CD4-positive, alpha-beta memory T cell (primary cell): ENCODE measurements at regions of chr15 and their contacts with region 1.

Region 1: DNA sequence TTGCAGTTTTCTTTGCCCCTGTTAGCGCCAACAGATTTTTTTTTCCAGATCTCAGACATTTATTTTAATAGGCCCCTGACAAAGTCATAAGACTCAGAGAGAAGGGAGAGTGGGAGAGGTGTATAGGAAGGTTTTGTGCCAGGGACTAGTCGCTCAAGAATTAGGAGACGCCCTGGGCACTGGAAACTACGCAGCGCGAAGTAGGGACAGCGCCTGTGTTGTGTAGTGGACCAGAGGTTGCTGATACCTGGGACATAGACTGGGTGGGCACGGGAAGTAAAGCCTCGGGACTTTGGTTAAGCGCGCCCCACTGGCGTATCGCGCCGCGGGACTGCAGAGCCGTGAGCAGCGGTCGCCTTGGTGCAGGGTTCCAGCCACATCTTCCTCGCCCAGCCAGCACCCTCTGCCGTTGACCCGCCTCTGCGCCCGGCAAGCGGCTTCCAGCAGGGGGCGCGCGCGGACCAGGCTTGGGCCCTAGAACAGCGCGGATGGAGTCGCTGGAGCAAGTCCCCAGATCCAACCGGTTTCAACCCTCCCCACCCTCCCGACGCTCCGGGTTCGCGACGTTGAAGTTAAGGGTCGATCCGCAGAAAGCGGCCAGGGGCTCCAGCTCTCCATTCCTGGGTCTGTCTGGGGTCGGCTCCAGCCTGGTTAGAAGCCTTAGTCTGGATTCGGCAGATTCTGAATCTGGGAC is 3.0 kb upstream of the ISLR2 start:
- DNase-seq: peak; percentile 69 to 76 (median 71)
- H3K4me3 ChIP-seq: no peak overlapping the region
- H3K4me3 Mint-ChIP-seq: peak overlapping the region in 6 of 8 donors; percentile 31 to 59 (median 39)
- H3K27ac ChIP-seq: no peak overlapping the region
- H3K27ac Mint-ChIP-seq: no peak overlapping the region
- H3K4me1 ChIP-seq: peaks cover 25% of the 10 kb centered on the region
- H3K4me1 Mint-ChIP-seq: peaks cover 2 to 29% (median 16%) of the 10 kb centered on the region in 4 donors
- H3K27me3 ChIP-seq: peaks cover 38% of the 10 kb centered on the region
- H3K27me3 Mint-ChIP-seq: peaks cover 50 to 60% of the 10 kb centered on the region in 2 donors

Region 2: GRCh38 chr15:74167891-74168331 is 40.5 kb after region 1 on chr15:
- CTCF ChIA-PET with region 1: no interaction called
- POLR2A ChIA-PET with region 1: no interaction called
- intact Hi-C with region 1: no loop called
- DNase-seq: no peak
- H3K4me3 ChIP-seq: no peak overlapping the region
- H3K4me3 Mint-ChIP-seq: no peak overlapping the region
- H3K27ac ChIP-seq: no peak overlapping the region
- H3K27ac Mint-ChIP-seq: no peak overlapping the region
- H3K4me1 ChIP-seq: no peaks in the 10 kb centered on the region
- H3K4me1 Mint-ChIP-seq: no peaks in the 10 kb centered on the region
- H3K27me3 ChIP-seq: no peaks in the 10 kb centered on the region
- H3K27me3 Mint-ChIP-seq: peaks cover 5 to 7% of the 10 kb centered on the region in 2 donors

Region 3: GRCh38 chr15:74302821-74303359 is 175.5 kb after region 1 on chr15:
- CTCF ChIA-PET with region 1: interaction called, 3 read pairs
- POLR2A ChIA-PET with region 1: no interaction called
- intact Hi-C with region 1: loop called (anchors 5 kb)
- DNase-seq: peak in 2 of 5 donors; percentile 21 to 22
- H3K4me3 ChIP-seq: no peak overlapping the region
- H3K4me3 Mint-ChIP-seq: no peak overlapping the region
- H3K27ac ChIP-seq: no peak overlapping the region
- H3K27ac Mint-ChIP-seq: no peak overlapping the region
- H3K4me1 ChIP-seq: no peaks in the 10 kb centered on the region
- H3K4me1 Mint-ChIP-seq: no peaks in the 10 kb centered on the region
- H3K27me3 ChIP-seq: no peaks in the 10 kb centered on the region
- H3K27me3 Mint-ChIP-seq: peaks cover 38 to 46% of the 10 kb centered on the region in 2 donors

Region 4: DNA sequence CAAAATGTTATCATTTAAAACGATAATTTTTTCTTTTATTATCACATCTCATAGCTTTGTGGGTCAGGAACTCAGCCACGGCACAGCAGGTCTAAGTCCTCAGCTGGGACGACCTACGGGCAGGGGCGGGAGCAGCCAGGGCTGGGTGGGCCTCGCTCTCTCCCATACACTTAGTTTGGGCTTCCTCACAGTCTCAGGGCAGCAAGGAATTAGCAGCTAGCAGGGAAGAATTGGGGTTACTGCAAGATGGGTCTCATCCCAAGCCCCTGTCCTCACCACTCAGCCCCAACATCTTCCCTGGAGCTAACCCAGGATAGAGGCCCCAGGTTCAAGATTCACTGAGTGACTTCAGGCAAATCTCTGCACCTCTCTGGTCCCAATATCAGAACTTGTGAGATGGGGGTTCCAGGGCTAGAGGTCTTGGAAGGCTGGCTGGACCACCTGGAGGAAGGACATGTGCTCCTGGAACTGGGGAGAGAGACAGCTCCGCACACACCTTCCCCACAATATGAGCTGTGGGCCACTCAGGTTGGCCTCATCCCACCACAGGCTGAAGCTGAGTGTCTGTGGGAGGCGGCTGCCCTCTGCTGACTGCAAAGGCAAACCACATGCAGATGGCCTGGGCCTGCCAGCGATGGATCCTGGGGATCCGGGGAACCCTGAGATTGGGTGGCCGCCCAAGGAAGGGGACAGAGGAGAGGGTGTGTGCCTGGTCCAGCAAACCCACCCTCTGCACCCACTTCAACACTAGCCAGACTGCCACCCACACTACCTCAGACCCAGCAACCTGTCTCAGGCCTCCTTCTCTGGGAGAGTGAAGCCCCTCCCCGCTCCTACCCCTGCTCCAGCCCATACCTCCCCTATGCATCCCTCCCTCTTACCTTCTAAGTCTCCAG is 195.0 kb after region 1 on chr15:
- CTCF ChIA-PET with region 1: interaction called, 12 read pairs
- POLR2A ChIA-PET with region 1: no interaction called
- intact Hi-C with region 1: loop called (anchors 1 kb)
- DNase-seq: peak; percentile 38 to 54 (median 45)
- H3K4me3 ChIP-seq: no peak overlapping the region
- H3K4me3 Mint-ChIP-seq: no peak overlapping the region
- H3K27ac ChIP-seq: no peak overlapping the region
- H3K27ac Mint-ChIP-seq: no peak overlapping the region
- H3K4me1 ChIP-seq: no peaks in the 10 kb centered on the region
- H3K4me1 Mint-ChIP-seq: no peaks in the 10 kb centered on the region
- H3K27me3 ChIP-seq: no peaks in the 10 kb centered on the region
- H3K27me3 Mint-ChIP-seq: peaks cover 2 to 6% of the 10 kb centered on the region in 2 donors